ENCODE measurements at regions of chr3 and their contacts with region 1.

Region 1: GRCh38 chr3:48716982-48717746 is at the start of gene IP6K2:
- DNase-seq: peak; percentile 97
- ATAC-seq: peak; percentile 99
- H3K4me3 ChIP-seq: peak within 1 kb of the TSS; percentile 90 to 99 (median 95)
- H3K4me3 Mint-ChIP-seq: peak within 1 kb of the TSS; percentile 98
- H3K27ac ChIP-seq: peak within 1 kb of the TSS; percentile 74 to 77
- H3K27ac Mint-ChIP-seq: peak within 1 kb of the TSS; percentile 93
- H3K4me1 ChIP-seq: peaks cover 18 to 20% of the 10 kb centered on the region in 2 donors
- H3K4me1 Mint-ChIP-seq: peaks cover 33% of the 10 kb centered on the region
- H3K27me3 ChIP-seq: no peaks in the 10 kb centered on the region
- H3K27me3 Mint-ChIP-seq: no peaks in the 10 kb centered on the region
- CTCF ChIP-seq: no peak
- total RNA-seq, gene IP6K2: 138 and 140 TPM in 2 replicates

Region 2: GRCh38 chr3:48663415-48664312 is 53.5 kb before region 1 on chr3:
- CTCF ChIA-PET with region 1: no interaction called
- POLR2A ChIA-PET with region 1: no interaction called
- intact Hi-C with region 1: loop called (anchors 2 kb)
- DNase-seq: peak; percentile 88
- ATAC-seq: peak; percentile 80
- H3K4me3 ChIP-seq: peak overlapping the region in 4 of 5 experiments; percentile 45 to 64 (median 52)
- H3K4me3 Mint-ChIP-seq: peak overlapping the region; percentile 87
- H3K27ac ChIP-seq: peak overlapping the region in 1 of 2 donors; percentile 13
- H3K27ac Mint-ChIP-seq: peak overlapping the region; percentile 71
- H3K4me1 ChIP-seq: peaks cover 28 to 31% of the 10 kb centered on the region in 2 donors
- H3K4me1 Mint-ChIP-seq: peaks cover 23% of the 10 kb centered on the region
- H3K27me3 ChIP-seq: peaks cover 0 to 47% (median 16%) of the 10 kb centered on the region in 4 experiments
- H3K27me3 Mint-ChIP-seq: peaks cover 16% of the 10 kb centered on the region
- CTCF ChIP-seq: peak; percentile 72

Region 3: GRCh38 chr3:48679411-48680391 is 37.5 kb before region 1 on chr3:
- CTCF ChIA-PET with region 1: no interaction called
- POLR2A ChIA-PET with region 1: no interaction called
- intact Hi-C with region 1: no loop called
- DNase-seq: peak; percentile 67
- ATAC-seq: peak; percentile 91
- H3K4me3 ChIP-seq: peak overlapping the region in 1 of 5 experiments; percentile 7
- H3K4me3 Mint-ChIP-seq: no peak overlapping the region
- H3K27ac ChIP-seq: no peak overlapping the region
- H3K27ac Mint-ChIP-seq: no peak overlapping the region
- H3K4me1 ChIP-seq: peaks cover 18 to 29% of the 10 kb centered on the region in 2 donors
- H3K4me1 Mint-ChIP-seq: peaks cover 28% of the 10 kb centered on the region
- H3K27me3 ChIP-seq: no peaks in the 10 kb centered on the region
- H3K27me3 Mint-ChIP-seq: no peaks in the 10 kb centered on the region
- CTCF ChIP-seq: no peak

Region 4: GRCh38 chr3:48739955-48740823 is 23.0 kb after region 1 on chr3:
- CTCF ChIA-PET with region 1: interaction called, 13 read pairs
- POLR2A ChIA-PET with region 1: interaction called, 3 read pairs
- intact Hi-C with region 1: no loop called
- DNase-seq: peak; percentile 67
- ATAC-seq: peak; percentile 90
- H3K4me3 ChIP-seq: no peak overlapping the region
- H3K4me3 Mint-ChIP-seq: no peak overlapping the region
- H3K27ac ChIP-seq: no peak overlapping the region
- H3K27ac Mint-ChIP-seq: no peak overlapping the region
- H3K4me1 ChIP-seq: peaks cover 0 to 8% of the 10 kb centered on the region in 2 donors
- H3K4me1 Mint-ChIP-seq: peaks cover 13% of the 10 kb centered on the region
- H3K27me3 ChIP-seq: no peaks in the 10 kb centered on the region
- H3K27me3 Mint-ChIP-seq: no peaks in the 10 kb centered on the region
- CTCF ChIP-seq: peak; percentile 77

Region 5: DNA sequence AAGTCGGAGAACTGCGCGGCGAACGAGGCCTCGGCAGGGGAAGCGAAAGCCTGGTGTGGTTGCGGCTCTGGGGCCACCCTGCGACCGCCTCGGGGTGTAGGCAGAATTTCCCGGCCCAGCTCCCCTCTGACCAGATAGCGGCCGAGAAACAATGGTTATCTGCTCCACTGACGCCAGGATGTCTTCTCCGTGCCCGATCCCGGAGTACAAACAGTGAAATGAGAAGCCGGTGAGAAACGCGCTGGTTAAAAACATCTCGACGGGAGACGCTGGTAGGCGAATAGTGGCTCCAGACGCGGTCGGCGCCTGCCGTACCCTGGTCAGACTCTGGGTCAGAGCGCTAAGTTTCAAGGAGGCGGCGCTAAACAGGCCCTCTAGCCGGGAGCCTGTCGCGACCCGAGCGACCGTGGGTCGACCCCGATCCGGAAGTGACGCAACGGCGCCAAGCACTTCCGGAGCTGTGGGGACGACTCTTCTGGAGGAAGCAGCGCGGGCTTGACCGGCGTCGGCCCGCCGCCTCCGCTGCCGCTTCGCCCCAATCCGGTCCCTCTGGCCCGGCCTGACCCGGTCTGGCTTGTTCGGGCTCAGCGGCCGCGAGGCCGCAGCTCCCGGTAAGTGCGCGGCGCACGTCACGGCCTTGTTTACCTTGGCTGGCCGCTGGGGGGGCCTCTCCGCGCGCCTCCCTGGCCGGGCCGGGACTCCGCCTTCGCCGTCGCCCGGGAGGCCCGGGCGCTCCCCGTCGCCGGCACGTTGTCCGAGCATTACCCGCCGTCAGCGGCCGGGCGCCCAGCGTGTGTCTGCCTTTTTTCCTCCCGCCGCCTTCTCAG is 201.4 kb after region 1 on chr3 and contains the start of gene ARIH2:
- CTCF ChIA-PET with region 1: interaction called, 4 read pairs
- POLR2A ChIA-PET with region 1: interaction called, 3 read pairs
- intact Hi-C with region 1: loop called (anchors 1 kb)
- DNase-seq: peak; percentile 96
- ATAC-seq: peak; percentile 81
- H3K4me3 ChIP-seq: peak within 1 kb of the TSS; percentile 76 to 94 (median 83)
- H3K4me3 Mint-ChIP-seq: peak within 1 kb of the TSS; percentile 99
- H3K27ac ChIP-seq: peak within 1 kb of the TSS; percentile 96 to 99
- H3K27ac Mint-ChIP-seq: peak within 1 kb of the TSS; percentile 99
- H3K4me1 ChIP-seq: peaks cover 14 to 27% of the 10 kb centered on the region in 2 donors
- H3K4me1 Mint-ChIP-seq: peaks cover 27% of the 10 kb centered on the region
- H3K27me3 ChIP-seq: no peaks in the 10 kb centered on the region
- H3K27me3 Mint-ChIP-seq: no peaks in the 10 kb centered on the region
- CTCF ChIP-seq: peak; percentile 49
- total RNA-seq, gene ARIH2: 148 and 162 TPM in 2 replicates

Measured in B cell (primary cell).